Activated CD4-positive, alpha-beta memory T cell treated with anti-CD3 and anti-CD28 coated beads, Interleukin-2, amount 10 ng/mL, durations not matched to agents 7 days and 5 days (primary cell): ENCODE measurements at regions of chr10 and their contacts with region 1.

Region 1: GRCh38 chr10:88820748-88821389 is 18.3 kb downstream of the LIPM start:
- DNase-seq: no peak
- H3K4me3 Mint-ChIP-seq: no peak overlapping the region
- H3K27ac Mint-ChIP-seq: no peak overlapping the region
- H3K4me1 Mint-ChIP-seq: peaks cover 23% of the 10 kb centered on the region
- H3K27me3 Mint-ChIP-seq: peaks cover 2% of the 10 kb centered on the region

Region 2: DNA sequence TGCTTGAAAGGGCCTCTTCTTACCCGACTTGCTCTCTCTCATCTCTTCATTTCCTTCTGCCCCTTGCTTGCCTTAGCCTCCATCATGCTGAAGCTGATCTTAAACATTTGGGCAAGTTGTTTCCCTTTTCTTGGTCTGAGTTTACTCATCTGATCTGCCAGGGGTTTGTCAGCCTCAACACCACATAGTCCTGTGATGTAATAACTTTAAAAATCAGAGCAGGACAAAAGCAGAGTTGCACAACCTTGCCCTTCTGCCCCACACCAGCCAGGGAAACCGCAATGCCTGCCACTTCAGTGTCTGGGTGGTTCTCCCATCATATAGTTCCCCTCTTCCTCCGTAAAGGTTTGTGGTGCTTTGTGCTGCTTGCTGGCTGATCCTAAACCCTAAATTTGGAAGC is 28.2 kb before region 1 on chr10:
- CTCF ChIA-PET with region 1: no interaction called
- POLR2A ChIA-PET with region 1: no interaction called
- DNase-seq: no peak
- H3K4me3 Mint-ChIP-seq: no peak overlapping the region
- H3K27ac Mint-ChIP-seq: no peak overlapping the region
- H3K4me1 Mint-ChIP-seq: peaks cover 20% of the 10 kb centered on the region
- H3K27me3 Mint-ChIP-seq: peaks cover 25% of the 10 kb centered on the region

Region 3: DNA sequence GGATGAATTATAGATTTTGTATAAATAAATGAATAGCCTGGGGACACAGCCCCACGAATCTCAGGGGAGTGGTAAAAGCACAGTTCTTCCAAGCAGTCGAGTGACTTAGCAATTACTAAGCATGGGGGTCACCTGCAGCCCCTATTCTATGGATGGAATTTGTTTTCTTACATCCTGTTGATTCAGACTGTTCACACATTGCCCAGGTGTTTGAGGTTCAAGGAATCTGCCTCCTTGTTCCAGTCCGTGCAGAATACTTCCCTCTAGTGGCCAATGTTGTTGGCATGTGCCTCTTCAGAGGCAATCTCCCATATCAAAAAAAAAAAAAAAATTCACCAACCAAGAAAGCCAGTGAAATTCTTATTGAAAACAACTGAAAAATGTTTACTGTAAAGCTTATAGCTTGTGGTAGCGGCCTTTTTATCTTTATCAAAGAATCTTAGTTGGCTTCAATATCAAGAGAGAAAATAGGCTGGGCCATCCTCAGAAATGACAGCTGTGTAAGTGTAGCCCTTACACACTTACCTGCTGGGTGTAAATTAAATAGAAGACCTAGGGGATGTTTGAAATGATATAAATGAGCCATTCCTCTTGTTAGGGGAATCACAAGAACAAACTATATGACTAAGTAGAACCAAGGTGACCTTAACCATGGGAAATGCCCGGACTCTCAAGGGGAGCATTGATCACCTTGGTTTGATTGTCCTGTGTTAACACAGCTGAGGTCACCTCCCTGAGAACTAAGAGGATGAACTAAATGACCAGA is 10.5 kb before region 1 on chr10:
- CTCF ChIA-PET with region 1: interaction called, 16 read pairs
- POLR2A ChIA-PET with region 1: no interaction called
- DNase-seq: peak; percentile 32
- H3K4me3 Mint-ChIP-seq: no peak overlapping the region
- H3K27ac Mint-ChIP-seq: no peak overlapping the region
- H3K4me1 Mint-ChIP-seq: peaks cover 3% of the 10 kb centered on the region
- H3K27me3 Mint-ChIP-seq: peaks cover 8% of the 10 kb centered on the region

Region 4: DNA sequence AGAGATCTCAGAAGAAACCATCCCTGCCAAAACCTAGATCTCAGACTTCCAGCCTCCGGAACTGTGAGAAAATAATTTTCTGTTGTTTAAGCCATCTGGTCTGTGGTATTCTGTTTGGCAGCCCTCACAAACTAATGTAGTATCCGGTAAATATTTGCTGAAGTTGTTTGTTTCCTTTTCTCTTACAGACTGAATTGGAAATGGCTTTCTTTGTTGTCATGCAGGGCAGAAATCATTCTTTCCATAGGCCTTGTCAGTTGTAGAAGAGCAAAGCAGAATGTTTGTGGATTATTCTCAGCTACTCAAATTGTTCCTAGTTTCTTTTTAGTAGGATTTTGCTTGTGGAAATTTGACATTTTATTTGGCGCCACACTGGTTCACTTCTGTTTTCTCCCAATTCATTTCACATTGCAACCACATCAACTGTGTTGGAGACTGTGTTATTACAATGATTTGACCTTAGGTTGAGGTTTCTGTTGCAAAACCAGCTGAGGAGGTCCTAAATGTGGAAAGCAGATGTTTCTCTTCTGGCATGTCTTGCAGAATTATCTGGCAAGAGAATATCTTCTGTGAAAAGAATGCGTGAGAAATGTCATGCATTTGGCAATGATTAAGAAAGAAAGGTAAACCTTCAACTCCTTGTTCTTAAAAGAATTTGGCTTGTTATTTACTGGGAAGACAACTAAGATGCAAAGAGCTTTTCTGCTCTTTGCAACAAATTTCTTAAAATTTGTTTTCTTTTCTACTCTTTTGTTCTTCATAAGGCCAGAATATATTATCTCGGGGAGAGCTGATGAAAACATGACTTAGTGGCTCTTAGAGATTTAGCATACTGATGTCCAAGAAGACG is 105.9 kb after region 1 on chr10:
- CTCF ChIA-PET with region 1: no interaction called
- POLR2A ChIA-PET with region 1: no interaction called
- DNase-seq: no peak
- H3K4me3 Mint-ChIP-seq: no peak overlapping the region
- H3K27ac Mint-ChIP-seq: no peak overlapping the region
- H3K4me1 Mint-ChIP-seq: no peaks in the 10 kb centered on the region
- H3K27me3 Mint-ChIP-seq: no peaks in the 10 kb centered on the region